ENCODE measurements at regions of chr1 and their contacts with region 1.

Region 1: DNA sequence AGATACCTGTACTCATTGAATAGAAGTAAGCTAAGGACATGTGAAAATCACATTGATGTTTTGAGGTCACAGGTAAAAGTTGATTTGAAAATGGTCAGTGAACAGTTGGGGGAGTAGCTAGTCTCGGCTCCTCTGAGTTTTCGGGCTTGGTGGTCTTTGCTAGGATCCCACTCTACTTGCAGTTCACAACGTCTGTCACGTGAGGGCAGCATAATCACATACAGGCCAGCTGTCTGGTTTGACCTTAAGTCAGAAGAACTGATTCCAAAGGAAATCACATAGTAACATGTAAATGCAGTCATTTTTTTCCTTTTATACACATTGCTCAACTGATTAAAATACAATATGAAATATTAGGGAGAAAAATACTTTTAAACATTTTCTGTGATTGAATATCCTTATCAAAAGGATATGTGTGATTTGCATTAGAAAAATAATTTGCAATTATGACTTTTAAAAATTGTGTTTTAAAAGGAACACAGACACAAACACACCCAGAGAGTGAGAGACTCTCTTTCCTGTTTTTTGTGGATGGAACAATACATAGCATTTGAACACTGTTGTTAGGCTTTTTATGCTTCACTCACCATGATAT is 21.8 kb upstream of the PDC start:
- DNase-seq: peak; percentile 45 to 59
- H3K4me3 ChIP-seq: no peak overlapping the region
- H3K27ac ChIP-seq: no peak overlapping the region
- H3K4me1 ChIP-seq: no peaks in the 10 kb centered on the region
- H3K27me3 ChIP-seq: no peaks in the 10 kb centered on the region
- CTCF ChIP-seq: peak; percentile 93

Region 2: GRCh38 chr1:186404454-186405051 is 78.2 kb before region 1 on chr1:
- CTCF ChIA-PET with region 1: no interaction called
- POLR2A ChIA-PET with region 1: no interaction called
- intact Hi-C with region 1: loop called (anchors 2 kb)
- DNase-seq: peak in 1 of 2 experiments; percentile 2
- H3K4me3 ChIP-seq: no peak overlapping the region
- H3K27ac ChIP-seq: no peak overlapping the region
- H3K4me1 ChIP-seq: no peaks in the 10 kb centered on the region
- H3K27me3 ChIP-seq: no peaks in the 10 kb centered on the region
- CTCF ChIP-seq: peak; percentile 75

Region 3: GRCh38 chr1:186494832-186495271 is 12.1 kb after region 1 on chr1:
- CTCF ChIA-PET with region 1: no interaction called
- POLR2A ChIA-PET with region 1: interaction called, 13 read pairs
- intact Hi-C with region 1: no loop called
- DNase-seq: peak in 1 of 2 experiments; percentile 63
- H3K4me3 ChIP-seq: no peak overlapping the region
- H3K27ac ChIP-seq: no peak overlapping the region; the same call in 1 of the 2 replicates
- H3K4me1 ChIP-seq: peaks cover 21% of the 10 kb centered on the region
- H3K27me3 ChIP-seq: no peaks in the 10 kb centered on the region
- CTCF ChIP-seq: no peak

Region 4: DNA sequence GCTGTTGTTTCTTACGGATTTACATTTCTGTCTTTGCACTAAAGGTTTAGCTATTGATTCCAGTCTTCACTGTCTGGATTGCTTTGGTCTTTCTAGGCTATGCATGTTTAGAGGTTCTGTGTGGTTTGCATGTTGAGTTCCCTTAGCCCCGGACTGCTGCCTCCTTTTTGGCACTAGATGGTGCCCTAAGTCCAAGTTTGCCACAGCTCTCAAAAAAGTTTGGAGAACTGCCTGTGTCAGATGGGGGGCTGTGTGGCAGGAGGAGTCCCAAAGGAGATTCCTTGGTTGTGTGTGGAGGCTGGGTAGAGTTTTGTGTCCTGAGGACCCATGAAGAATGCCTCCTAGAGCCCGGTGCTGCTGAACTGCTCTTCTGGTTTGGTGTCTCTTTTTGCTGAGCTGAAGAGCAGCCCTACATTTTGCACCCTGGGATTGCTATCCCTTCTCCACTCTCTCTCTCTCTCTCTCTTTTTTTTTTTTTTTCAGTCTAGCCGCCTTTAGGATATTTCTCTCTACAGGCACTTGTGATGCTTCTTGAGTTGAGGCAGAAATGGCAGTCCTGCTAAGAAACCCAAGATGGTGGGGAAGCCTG is 123.1 kb after region 1 on chr1:
- CTCF ChIA-PET with region 1: interaction called, 8 read pairs
- POLR2A ChIA-PET with region 1: no interaction called
- intact Hi-C with region 1: loop called (anchors 1 kb)
- DNase-seq: peak in 1 of 2 experiments; percentile 37
- H3K4me3 ChIP-seq: no peak overlapping the region
- H3K27ac ChIP-seq: no peak overlapping the region
- H3K4me1 ChIP-seq: no peaks in the 10 kb centered on the region
- H3K27me3 ChIP-seq: no peaks in the 10 kb centered on the region
- CTCF ChIP-seq: peak; percentile 72

Region 5: GRCh38 chr1:186915555-186915954 is 432.8 kb after region 1 on chr1:
- CTCF ChIA-PET with region 1: no interaction called
- POLR2A ChIA-PET with region 1: no interaction called
- intact Hi-C with region 1: loop called (anchors 5 kb)
- DNase-seq: no peak
- H3K4me3 ChIP-seq: no peak overlapping the region
- H3K27ac ChIP-seq: no peak overlapping the region
- H3K4me1 ChIP-seq: no peaks in the 10 kb centered on the region
- H3K27me3 ChIP-seq: no peaks in the 10 kb centered on the region
- CTCF ChIP-seq: no peak

Measured in PC-9 (cell line).